Activated CD4-positive, alpha-beta memory T cell treated with anti-CD3 and anti-CD28 coated beads for 36 hours (primary cell): ENCODE measurements at regions of chr6 and their contacts with region 1.

Region 1: DNA sequence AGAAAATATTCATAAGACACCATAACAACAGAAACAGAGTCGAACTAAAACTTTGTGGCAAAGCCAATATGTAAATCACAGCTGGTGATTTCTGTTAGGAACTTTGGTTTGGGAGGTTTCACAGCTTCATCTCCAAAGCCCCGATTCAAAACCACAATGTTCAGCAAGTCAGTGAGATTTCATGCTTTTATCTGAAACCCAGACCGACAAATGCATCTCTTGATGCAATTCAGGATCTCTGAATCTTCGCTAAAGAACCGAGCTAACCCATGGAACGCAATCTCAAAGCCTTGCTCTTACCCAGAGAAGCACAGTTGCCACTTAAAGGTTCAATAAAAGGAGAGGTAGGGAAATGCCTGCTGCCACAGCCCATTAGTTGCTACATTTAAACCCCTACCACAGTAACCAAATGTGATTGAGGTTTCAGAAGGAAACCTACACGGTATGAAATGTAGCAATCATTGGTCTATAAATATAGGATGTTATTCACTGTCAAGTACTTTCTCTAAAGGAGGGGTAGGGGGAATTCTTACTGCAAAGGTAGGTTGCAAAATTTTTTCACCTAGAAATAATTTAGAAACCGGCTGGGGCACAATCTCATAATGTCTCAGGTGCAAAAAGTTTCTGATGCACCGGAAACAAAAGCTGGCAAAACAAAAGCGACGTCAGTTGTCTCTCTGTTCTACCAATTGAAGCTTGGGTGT is 381.0 kb upstream of the ARID1B start:
- DNase-seq: peak; percentile 32
- H3K4me3 Mint-ChIP-seq: peak overlapping the region; percentile 69
- H3K27ac Mint-ChIP-seq: peak overlapping the region; percentile 72
- H3K4me1 Mint-ChIP-seq: peaks cover 71% of the 10 kb centered on the region
- H3K27me3 Mint-ChIP-seq: peaks cover 6% of the 10 kb centered on the region

Region 2: GRCh38 chr6:155327326-155328073 is 1068.7 kb before region 1 on chr6:
- CTCF ChIA-PET with region 1: no interaction called
- POLR2A ChIA-PET with region 1: no interaction called
- intact Hi-C with region 1: loop called (anchors 5 kb)
- DNase-seq: peak; percentile 71
- H3K4me3 Mint-ChIP-seq: no peak overlapping the region
- H3K27ac Mint-ChIP-seq: peak overlapping the region; percentile 44
- H3K4me1 Mint-ChIP-seq: peaks cover 13% of the 10 kb centered on the region
- H3K27me3 Mint-ChIP-seq: no peaks in the 10 kb centered on the region

Region 3: GRCh38 chr6:156175971-156176421 is 220.2 kb before region 1 on chr6:
- CTCF ChIA-PET with region 1: no interaction called
- POLR2A ChIA-PET with region 1: no interaction called
- intact Hi-C with region 1: loop called (anchors 1 kb)
- DNase-seq: no peak
- H3K4me3 Mint-ChIP-seq: no peak overlapping the region
- H3K27ac Mint-ChIP-seq: peak overlapping the region; percentile 35
- H3K4me1 Mint-ChIP-seq: peaks cover 24% of the 10 kb centered on the region
- H3K27me3 Mint-ChIP-seq: no peaks in the 10 kb centered on the region

Region 4: DNA sequence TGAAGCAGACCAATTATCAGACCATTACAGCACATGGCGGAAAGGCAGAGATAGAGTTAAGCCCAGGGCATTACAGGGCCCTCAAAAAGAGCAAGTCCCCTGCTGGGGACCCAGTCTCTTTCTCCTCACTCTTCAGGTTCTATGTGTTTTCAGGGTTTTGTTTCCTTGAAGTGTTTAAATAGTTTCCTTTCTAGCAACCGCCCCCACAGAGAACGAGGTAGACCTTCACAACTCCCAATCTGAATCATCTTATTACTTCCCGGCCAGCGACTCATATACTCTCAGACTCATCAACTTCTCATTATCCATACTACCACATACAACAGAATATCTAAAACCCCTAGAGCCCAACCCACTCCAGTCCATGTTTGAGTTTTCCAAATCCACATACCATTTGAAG is 145.6 kb before region 1 on chr6:
- CTCF ChIA-PET with region 1: no interaction called
- POLR2A ChIA-PET with region 1: no interaction called
- intact Hi-C with region 1: loop called (anchors 2 kb)
- DNase-seq: peak; percentile 63
- H3K4me3 Mint-ChIP-seq: no peak overlapping the region
- H3K27ac Mint-ChIP-seq: peak overlapping the region; percentile 71
- H3K4me1 Mint-ChIP-seq: peaks cover 18% of the 10 kb centered on the region
- H3K27me3 Mint-ChIP-seq: peaks cover 2% of the 10 kb centered on the region

Region 5: DNA sequence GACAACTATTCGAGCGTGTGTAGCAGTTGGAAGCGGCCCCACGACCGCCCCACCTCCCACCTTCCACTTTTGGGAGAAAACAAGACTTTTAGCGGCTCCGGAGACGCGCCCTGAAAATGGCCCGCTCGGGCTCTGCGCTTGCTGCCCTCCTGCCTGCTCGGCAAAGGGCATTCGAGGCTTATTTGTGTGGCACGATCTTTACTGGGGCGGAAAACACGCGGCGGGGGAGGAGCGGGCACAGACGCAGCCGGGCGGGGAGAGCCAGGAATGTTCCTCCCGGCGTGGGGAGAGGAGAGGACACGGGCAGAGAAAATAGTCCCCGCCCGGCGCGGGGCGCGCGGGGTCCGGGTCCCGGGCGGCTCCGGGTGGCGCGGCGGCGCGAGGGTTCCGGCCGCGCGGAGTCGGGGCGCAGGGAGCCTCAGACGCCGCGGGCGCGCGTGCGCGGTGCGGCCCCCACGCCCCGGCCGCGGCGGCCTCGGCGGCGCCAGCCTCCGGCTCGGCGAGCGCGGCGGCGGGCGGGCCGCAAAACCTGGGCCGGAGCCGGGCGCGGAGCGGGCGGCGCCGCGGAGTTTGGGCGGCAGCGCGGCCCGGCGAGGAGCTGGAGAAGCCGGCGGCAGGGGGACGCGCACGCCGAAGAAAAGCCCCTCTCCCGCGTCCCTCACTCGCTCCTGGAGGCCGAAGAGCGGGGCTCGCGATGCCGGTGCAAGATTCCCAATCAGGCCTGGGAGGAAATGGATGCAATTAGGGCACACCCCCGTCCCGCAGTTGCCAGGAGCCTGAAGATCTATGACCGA is 291.0 kb after region 1 on chr6:
- CTCF ChIA-PET with region 1: no interaction called
- POLR2A ChIA-PET with region 1: no interaction called
- intact Hi-C with region 1: loop called (anchors 10 kb)
- DNase-seq: peak; percentile 77
- H3K4me3 Mint-ChIP-seq: peak overlapping the region; percentile 77
- H3K27ac Mint-ChIP-seq: peak overlapping the region; percentile 73
- H3K4me1 Mint-ChIP-seq: peaks cover 24% of the 10 kb centered on the region
- H3K27me3 Mint-ChIP-seq: no peaks in the 10 kb centered on the region

Region 6: GRCh38 chr6:156752666-156753301 is 356.6 kb after region 1 on chr6:
- CTCF ChIA-PET with region 1: no interaction called
- POLR2A ChIA-PET with region 1: no interaction called
- intact Hi-C with region 1: no loop called
- DNase-seq: no peak
- H3K4me3 Mint-ChIP-seq: no peak overlapping the region
- H3K27ac Mint-ChIP-seq: no peak overlapping the region
- H3K4me1 Mint-ChIP-seq: no peaks in the 10 kb centered on the region
- H3K27me3 Mint-ChIP-seq: peaks cover 3% of the 10 kb centered on the region

Region 7: DNA sequence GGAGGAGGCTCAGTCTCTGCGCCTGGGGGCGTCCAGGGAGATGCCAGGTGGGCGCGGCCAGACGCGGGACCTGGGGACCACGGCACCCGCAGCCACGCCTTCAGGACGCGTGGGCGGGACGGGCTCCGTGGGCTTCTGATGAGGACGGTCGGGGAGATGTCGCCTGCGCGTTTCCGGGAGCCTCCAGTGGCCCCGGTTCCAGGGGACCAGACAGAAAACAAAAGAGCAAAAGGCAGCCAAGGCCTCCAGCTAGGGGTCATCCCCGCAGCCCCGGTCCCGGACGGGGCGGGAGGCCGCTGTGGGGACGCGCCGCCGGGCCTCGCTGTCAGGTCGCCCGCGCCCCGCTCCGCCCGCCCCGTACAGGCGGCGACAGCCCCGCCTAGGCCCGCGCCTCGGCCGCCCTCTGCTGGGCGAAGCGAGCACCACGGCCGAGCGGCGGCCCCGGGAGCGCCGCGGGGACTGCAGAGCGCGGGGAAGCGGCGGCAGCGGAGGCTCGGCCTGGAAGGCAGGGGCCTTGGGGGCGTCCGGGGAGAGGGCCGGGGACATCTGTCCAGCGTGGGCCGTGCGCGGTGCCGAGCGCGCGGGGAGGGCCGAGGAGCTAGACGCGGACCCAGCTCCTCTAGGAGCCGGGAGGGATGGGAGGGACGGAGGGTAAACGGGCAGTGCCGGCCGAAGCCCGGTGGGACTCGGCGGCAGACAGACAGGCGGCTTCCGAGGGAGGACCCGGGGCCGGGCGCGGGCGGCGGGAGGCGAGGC is 878.4 kb after region 1 on chr6:
- CTCF ChIA-PET with region 1: interaction called, 3 read pairs
- POLR2A ChIA-PET with region 1: no interaction called
- intact Hi-C with region 1: loop called (anchors 2 kb)
- DNase-seq: peak; percentile 90
- H3K4me3 Mint-ChIP-seq: peak overlapping the region; percentile 76
- H3K27ac Mint-ChIP-seq: peak overlapping the region; percentile 89
- H3K4me1 Mint-ChIP-seq: peaks cover 5% of the 10 kb centered on the region
- H3K27me3 Mint-ChIP-seq: no peaks in the 10 kb centered on the region